Naive thymus-derived CD4-positive, alpha-beta T cell (primary cell): ENCODE measurements at regions of chr22 and their contacts with region 1.

Region 1: GRCh38 chr22:41197038-41197972 is 7.8 kb upstream of the L3MBTL2 start:
- DNase-seq: peak; percentile 52 to 91 (median 72)
- ATAC-seq: peak; percentile 95
- H3K4me3 ChIP-seq: peak overlapping the region; percentile 92
- H3K4me3 Mint-ChIP-seq: peak overlapping the region; percentile 88 to 96 (median 92)
- H3K27ac ChIP-seq: peak overlapping the region; percentile 61
- H3K27ac Mint-ChIP-seq: peak overlapping the region in 8 of 9 donors; percentile 35 to 86 (median 60)
- H3K4me1 ChIP-seq: peaks cover 9 to 12% of the 10 kb centered on the region in 2 donors
- H3K4me1 Mint-ChIP-seq: peaks cover 8 to 16% (median 12%) of the 10 kb centered on the region in 7 donors
- H3K27me3 ChIP-seq: no peaks in the 10 kb centered on the region
- H3K27me3 Mint-ChIP-seq: peaks cover 0 to 38% (median 0%) of the 10 kb centered on the region in 5 donors

Region 2: GRCh38 chr22:41022470-41023298 is 174.6 kb before region 1 on chr22:
- CTCF ChIA-PET with region 1: no interaction called
- POLR2A ChIA-PET with region 1: no interaction called
- intact Hi-C with region 1: loop called in 1 of 2 experiments (anchors 1 kb)
- DNase-seq: peak; percentile 69 to 83 (median 74)
- ATAC-seq: peak; percentile 89
- H3K4me3 ChIP-seq: peak overlapping the region; percentile 57
- H3K4me3 Mint-ChIP-seq: peak overlapping the region; percentile 75 to 91 (median 84)
- H3K27ac ChIP-seq: peak overlapping the region; percentile 82
- H3K27ac Mint-ChIP-seq: peak overlapping the region; percentile 74 to 91 (median 88)
- H3K4me1 ChIP-seq: peaks cover 12 to 13% of the 10 kb centered on the region in 2 donors
- H3K4me1 Mint-ChIP-seq: peaks cover 12 to 23% (median 21%) of the 10 kb centered on the region in 7 donors
- H3K27me3 ChIP-seq: no peaks in the 10 kb centered on the region
- H3K27me3 Mint-ChIP-seq: peaks cover 0 to 14% (median 0%) of the 10 kb centered on the region in 5 donors

Region 3: DNA sequence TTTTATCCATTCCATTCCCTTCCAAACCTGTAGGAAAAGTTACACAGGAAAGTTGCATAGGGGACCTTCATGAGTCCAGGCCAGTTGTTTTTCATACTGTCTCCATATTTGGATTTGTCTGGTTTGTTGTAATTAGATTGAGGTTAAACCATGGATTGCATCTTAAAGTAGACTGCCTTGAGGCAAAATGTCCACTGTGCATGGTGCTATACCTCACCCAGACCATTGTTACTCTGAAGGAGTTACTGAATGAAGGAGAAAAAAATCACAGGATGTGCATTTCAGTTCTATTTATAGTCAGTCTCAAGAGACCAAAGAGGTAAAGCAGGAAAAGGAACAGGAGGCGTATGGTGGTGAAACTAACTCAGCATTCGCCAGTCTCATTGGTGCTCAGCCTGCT is 21.8 kb before region 1 on chr22:
- CTCF ChIA-PET with region 1: interaction called, 3 read pairs
- POLR2A ChIA-PET with region 1: no interaction called
- intact Hi-C with region 1: loop called in 1 of 2 experiments (anchors 2 kb)
- DNase-seq: no peak
- ATAC-seq: no peak
- H3K4me3 ChIP-seq: no peak overlapping the region
- H3K4me3 Mint-ChIP-seq: no peak overlapping the region
- H3K27ac ChIP-seq: no peak overlapping the region
- H3K27ac Mint-ChIP-seq: peak overlapping the region in 4 of 9 donors; percentile 45 to 73 (median 64)
- H3K4me1 ChIP-seq: no peaks in the 10 kb centered on the region
- H3K4me1 Mint-ChIP-seq: peaks cover 4 to 33% (median 28%) of the 10 kb centered on the region in 7 donors
- H3K27me3 ChIP-seq: no peaks in the 10 kb centered on the region
- H3K27me3 Mint-ChIP-seq: no peaks in the 10 kb centered on the region

Region 4: DNA sequence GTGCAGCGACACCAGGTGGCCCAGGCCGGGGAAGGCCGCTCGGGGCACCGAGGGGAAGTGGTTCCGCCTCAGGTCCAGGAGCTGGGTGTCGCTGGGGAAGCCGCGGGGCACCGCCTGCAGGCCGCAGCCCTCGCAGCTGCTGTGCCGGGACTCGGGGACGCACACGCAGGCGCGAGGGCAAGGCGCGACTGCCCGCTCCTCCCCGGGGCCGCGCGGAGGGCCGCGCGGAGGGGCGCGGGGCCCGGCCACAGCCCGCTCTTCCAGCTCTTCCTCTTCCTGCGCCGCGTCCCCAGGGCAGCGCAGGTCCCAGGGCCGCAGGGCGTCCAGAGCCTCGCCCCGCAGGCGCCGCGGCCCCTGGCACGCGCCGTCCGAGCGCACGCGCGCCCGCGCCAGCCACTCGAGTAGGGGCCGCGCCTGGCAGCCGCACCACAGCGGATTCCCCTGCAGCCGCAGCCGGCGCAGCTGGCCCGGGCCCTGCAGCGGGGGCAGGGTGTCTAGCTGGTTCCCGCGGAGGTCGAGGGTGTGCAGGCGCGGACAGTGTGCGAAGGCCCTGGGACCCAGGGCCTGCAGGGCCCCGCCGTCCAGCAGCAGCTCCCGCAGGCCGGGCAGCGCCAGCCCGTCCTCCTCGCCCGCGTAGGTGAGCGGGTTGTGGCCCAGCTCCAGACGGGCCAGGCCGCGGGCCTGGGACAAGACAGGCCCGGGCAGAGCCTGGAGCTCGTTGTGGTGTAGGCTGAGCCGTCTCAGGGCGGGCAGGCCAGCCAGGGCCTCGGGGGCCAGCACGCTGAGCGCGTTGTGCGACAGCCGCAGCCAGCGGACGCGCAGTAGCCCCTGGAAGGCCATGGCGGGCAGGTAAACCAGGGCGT is 40.6 kb after region 1 on chr22:
- CTCF ChIA-PET with region 1: interaction called, 9 read pairs
- POLR2A ChIA-PET with region 1: interaction called, 10 read pairs
- intact Hi-C with region 1: loop called in 1 of 2 experiments (anchors 5 kb)
- DNase-seq: peak; percentile 74 to 86 (median 84)
- ATAC-seq: peak; percentile 96
- H3K4me3 ChIP-seq: peak overlapping the region; percentile 10
- H3K4me3 Mint-ChIP-seq: peak overlapping the region in 9 of 10 donors; percentile 54 to 78 (median 73)
- H3K27ac ChIP-seq: peak overlapping the region; percentile 57
- H3K27ac Mint-ChIP-seq: peak overlapping the region in 2 of 9 donors; percentile 44 to 63
- H3K4me1 ChIP-seq: peaks cover 0 to 11% of the 10 kb centered on the region in 2 donors
- H3K4me1 Mint-ChIP-seq: peaks cover 5 to 19% (median 11%) of the 10 kb centered on the region in 7 donors
- H3K27me3 ChIP-seq: no peaks in the 10 kb centered on the region
- H3K27me3 Mint-ChIP-seq: peaks cover 0 to 2% (median 0%) of the 10 kb centered on the region in 5 donors

Region 5: GRCh38 chr22:41248314-41248713 is 51.0 kb after region 1 on chr22:
- CTCF ChIA-PET with region 1: no interaction called
- POLR2A ChIA-PET with region 1: no interaction called
- intact Hi-C with region 1: no loop called
- DNase-seq: no peak
- ATAC-seq: no peak
- H3K4me3 ChIP-seq: no peak overlapping the region
- H3K4me3 Mint-ChIP-seq: no peak overlapping the region
- H3K27ac ChIP-seq: no peak overlapping the region
- H3K27ac Mint-ChIP-seq: no peak overlapping the region
- H3K4me1 ChIP-seq: no peaks in the 10 kb centered on the region
- H3K4me1 Mint-ChIP-seq: no peaks in the 10 kb centered on the region
- H3K27me3 ChIP-seq: no peaks in the 10 kb centered on the region
- H3K27me3 Mint-ChIP-seq: no peaks in the 10 kb centered on the region

Region 6: DNA sequence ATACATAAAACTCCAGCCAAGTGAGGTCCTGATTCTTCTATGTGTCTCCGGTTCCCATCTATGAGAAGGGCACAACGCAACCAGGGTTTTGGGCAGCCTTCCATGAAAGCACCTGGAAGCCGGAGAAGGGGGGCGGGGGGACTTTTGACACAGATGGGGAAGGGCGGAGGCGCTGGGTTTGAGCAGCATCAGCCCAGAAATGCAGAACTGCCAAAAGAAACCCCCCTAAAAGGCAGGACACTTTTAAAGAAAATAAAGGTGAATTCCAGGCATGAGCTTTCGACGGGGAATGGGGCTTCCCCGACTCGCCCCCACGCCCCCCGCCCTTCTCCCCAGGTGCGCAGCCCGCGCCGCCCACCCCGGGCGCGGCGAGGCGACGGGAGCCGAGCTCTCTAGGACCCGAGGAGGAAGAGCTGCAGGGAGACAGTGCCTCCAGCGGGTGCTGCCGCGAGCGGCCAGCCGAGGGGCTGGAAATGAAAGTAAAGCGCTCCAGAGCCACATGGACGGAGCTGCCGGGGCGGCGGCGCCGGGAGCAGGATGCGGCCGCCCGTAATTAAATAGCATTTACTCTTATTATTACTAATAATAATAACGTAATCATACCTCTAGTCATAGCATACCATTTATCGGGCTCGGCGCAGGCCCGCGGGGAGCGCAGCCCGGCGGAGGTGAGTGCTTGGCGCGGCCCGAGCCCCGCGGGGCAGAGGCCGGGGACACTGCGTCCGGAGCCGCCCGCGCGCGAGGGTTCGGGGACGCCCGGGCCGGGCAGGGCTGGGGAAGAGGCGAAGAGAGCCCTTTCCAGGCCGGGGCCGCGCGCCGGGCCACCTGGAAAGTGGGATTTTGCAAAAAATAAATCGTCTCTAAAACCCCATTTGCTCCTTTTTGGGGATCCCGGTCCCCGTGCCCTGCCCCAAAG is 104.1 kb after region 1 on chr22 and contains the start of gene ZC3H7B:
- CTCF ChIA-PET with region 1: no interaction called
- POLR2A ChIA-PET with region 1: no interaction called
- intact Hi-C with region 1: loop called in 1 of 2 experiments (anchors 5 kb)
- DNase-seq: peak; percentile 73 to 89 (median 83)
- ATAC-seq: peak; percentile 98
- H3K4me3 ChIP-seq: peak within 1 kb of the TSS; percentile 22
- H3K4me3 Mint-ChIP-seq: peak within 1 kb of the TSS; percentile 67 to 91 (median 85)
- H3K27ac ChIP-seq: peak within 1 kb of the TSS; percentile 82
- H3K27ac Mint-ChIP-seq: peak within 1 kb of the TSS; percentile 72 to 96 (median 87)
- H3K4me1 ChIP-seq: peaks cover 13 to 15% of the 10 kb centered on the region in 2 donors
- H3K4me1 Mint-ChIP-seq: peaks cover 19 to 35% (median 32%) of the 10 kb centered on the region in 7 donors
- H3K27me3 ChIP-seq: no peaks in the 10 kb centered on the region
- H3K27me3 Mint-ChIP-seq: no peaks in the 10 kb centered on the region
- total RNA-seq, gene ZC3H7B: 36.9 to 65.9 (median 42.7) TPM

Region 7: DNA sequence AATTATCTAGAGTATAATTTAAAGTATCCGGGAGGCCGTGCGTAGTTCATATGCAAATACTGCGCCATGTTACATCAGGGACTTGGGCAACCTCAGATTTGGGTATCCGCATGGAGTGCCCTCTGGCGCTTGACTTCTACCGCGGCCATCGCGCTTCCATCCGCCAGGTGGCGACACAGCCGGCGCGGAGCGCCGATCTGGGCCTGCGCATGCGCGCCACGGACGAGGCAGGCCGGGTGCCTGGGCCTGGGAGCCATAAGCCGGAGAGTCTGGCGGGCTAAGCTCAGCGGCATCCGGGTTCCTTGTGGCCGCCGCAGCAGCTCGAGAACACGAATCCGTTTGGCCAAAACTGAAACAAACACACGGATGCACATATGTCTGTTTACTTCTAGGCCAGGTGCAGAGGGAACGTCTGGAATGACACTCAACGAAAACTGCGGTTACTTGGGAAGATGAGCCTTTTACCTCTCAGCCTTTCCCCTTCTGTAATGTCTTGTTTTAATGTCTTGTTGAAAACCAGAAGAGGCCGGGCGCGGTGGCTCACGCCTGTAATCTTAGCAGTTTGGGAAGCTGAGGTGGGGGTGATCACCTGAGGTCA is 469.5 kb after region 1 on chr22:
- CTCF ChIA-PET with region 1: no interaction called
- POLR2A ChIA-PET with region 1: no interaction called
- intact Hi-C with region 1: loop called in 1 of 2 experiments (anchors 5 kb)
- DNase-seq: peak; percentile 88 to 97 (median 95)
- ATAC-seq: peak; percentile 98
- H3K4me3 ChIP-seq: peak overlapping the region; percentile 44
- H3K4me3 Mint-ChIP-seq: peak overlapping the region; percentile 75 to 87 (median 82)
- H3K27ac ChIP-seq: peak overlapping the region; percentile 72
- H3K27ac Mint-ChIP-seq: peak overlapping the region; percentile 91 to 99 (median 97)
- H3K4me1 ChIP-seq: peaks cover 7% of the 10 kb centered on the region in 2 donors
- H3K4me1 Mint-ChIP-seq: peaks cover 0 to 25% (median 10%) of the 10 kb centered on the region in 7 donors
- H3K27me3 ChIP-seq: no peaks in the 10 kb centered on the region
- H3K27me3 Mint-ChIP-seq: no peaks in the 10 kb centered on the region